Panc1 (cell line): ENCODE measurements at regions of chr4 and their contacts with region 1.

Region 1: DNA sequence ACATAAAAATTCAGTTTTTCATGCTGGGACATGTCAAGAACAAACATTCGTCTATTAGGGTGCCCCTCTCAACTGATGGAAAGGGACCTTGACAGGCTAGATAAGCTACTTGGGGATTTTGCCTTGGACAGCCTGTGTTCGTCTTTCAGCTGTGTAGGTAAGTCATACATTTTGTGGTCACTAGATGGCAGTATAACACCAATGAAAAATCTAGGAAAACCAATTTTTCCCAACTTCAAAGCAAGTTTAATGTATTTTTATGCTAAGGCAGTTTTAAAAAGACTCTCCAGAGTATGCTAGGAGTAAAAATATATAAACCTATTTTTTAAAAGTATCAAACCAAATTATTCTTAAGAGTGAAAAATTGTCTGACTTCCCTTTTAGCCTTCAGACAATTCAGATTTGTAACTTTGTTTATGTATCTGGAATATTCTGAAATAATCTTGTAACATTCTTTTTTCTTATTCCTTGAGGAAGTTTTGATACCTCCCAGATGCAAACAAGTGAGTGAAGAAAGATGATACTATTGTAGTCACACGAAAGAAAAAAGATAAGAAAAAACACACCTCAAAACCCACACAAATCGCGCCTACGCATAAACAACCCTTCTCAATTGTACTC is 158.3 kb downstream of the CPE start:
- DNase-seq: peak; percentile 30
- ATAC-seq: no peak; the same call in 1 of the 2 replicates
- H3K4me3 ChIP-seq: no peak overlapping the region
- H3K27ac ChIP-seq: no peak overlapping the region
- H3K4me1 ChIP-seq: no peaks in the 10 kb centered on the region
- H3K27me3 ChIP-seq: no peaks in the 10 kb centered on the region
- CTCF ChIP-seq: peak; percentile 43

Region 2: GRCh38 chr4:165502919-165503907 is 33.9 kb before region 1 on chr4:
- CTCF ChIA-PET with region 1: no interaction called
- POLR2A ChIA-PET with region 1: no interaction called
- in situ Hi-C with region 1: no loop called
- intact Hi-C with region 1: no loop called
- DNase-seq: no peak
- ATAC-seq: no peak
- H3K4me3 ChIP-seq: no peak overlapping the region
- H3K27ac ChIP-seq: no peak overlapping the region
- H3K4me1 ChIP-seq: no peaks in the 10 kb centered on the region
- H3K27me3 ChIP-seq: no peaks in the 10 kb centered on the region
- CTCF ChIP-seq: no peak

Region 3: DNA sequence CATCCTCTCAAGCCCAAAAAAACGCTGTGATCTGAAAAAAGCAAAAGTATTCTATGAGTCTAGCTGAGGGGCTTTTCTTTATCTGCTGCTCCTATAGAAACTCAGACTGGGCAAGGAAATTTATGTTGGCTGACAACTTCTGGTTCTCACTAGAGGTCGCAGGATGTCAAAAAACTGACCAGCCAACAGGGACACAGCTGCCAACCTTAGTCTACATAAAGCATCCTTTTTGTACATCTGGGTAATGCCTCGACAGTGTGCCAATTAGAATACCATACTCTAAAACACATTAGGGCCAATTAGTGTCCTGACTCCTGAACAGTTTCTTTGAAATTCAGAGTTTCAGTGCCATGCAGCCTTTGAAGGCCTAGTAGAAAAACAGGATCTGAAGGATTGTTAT is 327.1 kb after region 1 on chr4:
- CTCF ChIA-PET with region 1: no interaction called
- POLR2A ChIA-PET with region 1: no interaction called
- in situ Hi-C with region 1: no loop called
- intact Hi-C with region 1: loop called (anchors 10 kb)
- DNase-seq: no peak
- ATAC-seq: no peak
- H3K4me3 ChIP-seq: no peak overlapping the region
- H3K27ac ChIP-seq: no peak overlapping the region
- H3K4me1 ChIP-seq: no peaks in the 10 kb centered on the region
- H3K27me3 ChIP-seq: no peaks in the 10 kb centered on the region
- CTCF ChIP-seq: peak; percentile 47